CD8-positive, alpha-beta T cell (primary cell): ENCODE measurements at regions of chr5 and their contacts with region 1.

Region 1: DNA sequence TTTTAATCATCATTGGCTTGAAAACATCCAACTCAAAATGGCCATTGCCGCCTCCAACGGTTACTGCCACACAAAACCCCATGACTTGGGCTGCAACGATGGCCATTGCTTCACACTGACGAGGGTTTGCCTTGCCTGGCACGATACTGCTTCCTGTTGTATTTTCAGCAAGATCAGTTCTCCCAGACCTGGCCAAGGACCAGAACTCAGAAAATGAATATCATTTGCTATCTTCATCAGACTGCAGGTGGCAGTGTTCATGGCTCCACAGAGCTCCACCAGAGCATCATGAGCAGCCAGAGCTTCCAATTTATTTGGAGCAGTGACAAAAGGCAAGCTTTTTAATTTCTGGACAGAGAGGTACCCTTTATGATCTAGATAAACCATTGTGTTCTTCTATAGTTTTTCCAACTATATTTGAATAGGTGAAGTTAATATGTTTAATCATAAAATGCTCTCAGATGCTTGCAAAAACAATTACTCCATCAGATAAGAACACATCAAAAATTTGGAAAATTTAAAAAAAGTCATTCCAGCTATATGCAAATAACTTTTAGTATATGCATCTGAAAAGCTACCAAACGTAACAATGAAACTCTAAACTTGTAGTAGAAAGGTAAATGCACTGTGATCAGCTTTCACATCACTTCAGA is 10.4 kb downstream of the AMACR start:
- DNase-seq: peak in 6 of 9 experiments; percentile 3 to 62 (median 38)
- ATAC-seq: no peak
- H3K4me3 ChIP-seq: no peak overlapping the region
- H3K4me3 Mint-ChIP-seq: no peak overlapping the region
- H3K27ac ChIP-seq: no peak overlapping the region
- H3K27ac Mint-ChIP-seq: peak overlapping the region; percentile 14
- H3K4me1 ChIP-seq: no peaks in the 10 kb centered on the region
- H3K4me1 Mint-ChIP-seq: peaks cover 5% of the 10 kb centered on the region
- H3K27me3 ChIP-seq: no peaks in the 10 kb centered on the region
- H3K27me3 Mint-ChIP-seq: no peaks in the 10 kb centered on the region
- CTCF ChIP-seq: peak; percentile 47

Region 2: GRCh38 chr5:32419791-32420190 is 1577.7 kb before region 1 on chr5:
- CTCF ChIA-PET with region 1: no interaction called
- POLR2A ChIA-PET with region 1: no interaction called
- intact Hi-C with region 1: no loop called
- DNase-seq: no peak
- ATAC-seq: no peak
- H3K4me3 ChIP-seq: no peak overlapping the region
- H3K4me3 Mint-ChIP-seq: no peak overlapping the region
- H3K27ac ChIP-seq: no peak overlapping the region
- H3K27ac Mint-ChIP-seq: no peak overlapping the region
- H3K4me1 ChIP-seq: peaks cover 6% of the 10 kb centered on the region
- H3K4me1 Mint-ChIP-seq: peaks cover 43% of the 10 kb centered on the region
- H3K27me3 ChIP-seq: no peaks in the 10 kb centered on the region
- H3K27me3 Mint-ChIP-seq: no peaks in the 10 kb centered on the region
- CTCF ChIP-seq: no peak

Region 3: DNA sequence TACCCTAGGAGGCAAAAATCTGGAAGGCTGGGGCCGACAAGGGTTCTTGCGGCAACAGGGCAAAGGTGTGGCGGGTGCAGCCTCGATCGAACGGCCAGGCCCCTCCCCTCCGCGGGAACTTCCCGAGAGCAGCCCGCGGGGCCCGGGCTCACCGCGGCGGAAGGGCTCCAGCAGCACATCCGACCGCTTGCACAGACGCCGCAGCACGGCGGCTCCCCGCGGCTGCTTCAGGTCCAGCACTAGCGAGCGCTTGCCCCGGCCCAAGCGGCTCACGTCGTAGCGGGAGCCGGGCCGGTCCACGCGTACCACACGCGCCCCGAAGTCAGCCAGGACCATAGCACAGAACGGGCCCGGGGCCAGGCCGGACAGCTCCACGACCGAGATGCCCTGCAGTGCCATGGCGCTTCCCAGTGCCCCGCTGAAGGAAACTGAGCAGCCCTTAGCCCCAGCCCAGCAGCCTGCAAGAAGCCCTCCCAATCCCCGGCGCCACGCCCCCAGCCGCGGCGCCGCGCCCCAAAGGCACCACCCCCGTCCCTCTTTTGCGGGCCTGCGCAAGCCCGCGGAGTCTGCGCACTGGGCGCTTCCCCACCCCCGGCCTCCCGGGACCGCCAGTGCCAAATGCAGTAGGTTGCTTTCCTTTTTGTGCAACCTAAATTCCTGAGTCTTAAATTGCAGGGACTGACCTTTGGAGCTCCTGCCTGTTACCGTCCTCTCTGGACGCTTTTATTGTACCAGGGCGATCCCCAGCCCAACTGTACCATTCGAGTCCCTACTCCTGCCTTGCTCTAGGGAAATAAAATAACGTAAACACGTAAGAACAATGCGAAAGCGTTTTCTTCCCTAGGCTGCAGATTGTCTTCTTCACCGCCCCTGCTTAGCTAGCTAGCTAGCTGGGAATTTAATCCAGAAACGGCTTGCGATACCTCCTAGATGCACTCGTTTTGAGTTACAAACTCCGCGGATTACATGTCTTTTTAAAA is 10.5 kb after region 1 on chr5 and contains the start of gene AMACR:
- CTCF ChIA-PET with region 1: interaction called, 4 read pairs
- POLR2A ChIA-PET with region 1: interaction called, 7 read pairs
- intact Hi-C with region 1: loop called in 1 of 2 experiments (anchors 1 kb)
- DNase-seq: peak; percentile 58 to 95 (median 89)
- ATAC-seq: peak; percentile 83
- H3K4me3 ChIP-seq: peak within 1 kb of the TSS; percentile 72 to 76
- H3K4me3 Mint-ChIP-seq: peak within 1 kb of the TSS; percentile 97
- H3K27ac ChIP-seq: peak within 1 kb of the TSS; percentile 67 to 78
- H3K27ac Mint-ChIP-seq: peak within 1 kb of the TSS; percentile 94
- H3K4me1 ChIP-seq: peaks cover 16% of the 10 kb centered on the region
- H3K4me1 Mint-ChIP-seq: peaks cover 21% of the 10 kb centered on the region
- H3K27me3 ChIP-seq: no peaks in the 10 kb centered on the region
- H3K27me3 Mint-ChIP-seq: no peaks in the 10 kb centered on the region
- CTCF ChIP-seq: no peak
- total RNA-seq, gene AMACR: 1.2 to 1.5 TPM

Region 4: GRCh38 chr5:34464830-34465229 is 467.4 kb after region 1 on chr5:
- CTCF ChIA-PET with region 1: no interaction called
- POLR2A ChIA-PET with region 1: no interaction called
- intact Hi-C with region 1: loop called in 1 of 2 experiments (anchors 2 kb)
- DNase-seq: no peak
- ATAC-seq: no peak
- H3K4me3 ChIP-seq: no peak overlapping the region
- H3K4me3 Mint-ChIP-seq: no peak overlapping the region
- H3K27ac ChIP-seq: no peak overlapping the region
- H3K27ac Mint-ChIP-seq: no peak overlapping the region
- H3K4me1 ChIP-seq: no peaks in the 10 kb centered on the region
- H3K4me1 Mint-ChIP-seq: no peaks in the 10 kb centered on the region
- H3K27me3 ChIP-seq: no peaks in the 10 kb centered on the region
- H3K27me3 Mint-ChIP-seq: peaks cover 9% of the 10 kb centered on the region
- CTCF ChIP-seq: no peak